ENCODE measurements at regions of chr11 and their contacts with region 1.

Region 1: DNA sequence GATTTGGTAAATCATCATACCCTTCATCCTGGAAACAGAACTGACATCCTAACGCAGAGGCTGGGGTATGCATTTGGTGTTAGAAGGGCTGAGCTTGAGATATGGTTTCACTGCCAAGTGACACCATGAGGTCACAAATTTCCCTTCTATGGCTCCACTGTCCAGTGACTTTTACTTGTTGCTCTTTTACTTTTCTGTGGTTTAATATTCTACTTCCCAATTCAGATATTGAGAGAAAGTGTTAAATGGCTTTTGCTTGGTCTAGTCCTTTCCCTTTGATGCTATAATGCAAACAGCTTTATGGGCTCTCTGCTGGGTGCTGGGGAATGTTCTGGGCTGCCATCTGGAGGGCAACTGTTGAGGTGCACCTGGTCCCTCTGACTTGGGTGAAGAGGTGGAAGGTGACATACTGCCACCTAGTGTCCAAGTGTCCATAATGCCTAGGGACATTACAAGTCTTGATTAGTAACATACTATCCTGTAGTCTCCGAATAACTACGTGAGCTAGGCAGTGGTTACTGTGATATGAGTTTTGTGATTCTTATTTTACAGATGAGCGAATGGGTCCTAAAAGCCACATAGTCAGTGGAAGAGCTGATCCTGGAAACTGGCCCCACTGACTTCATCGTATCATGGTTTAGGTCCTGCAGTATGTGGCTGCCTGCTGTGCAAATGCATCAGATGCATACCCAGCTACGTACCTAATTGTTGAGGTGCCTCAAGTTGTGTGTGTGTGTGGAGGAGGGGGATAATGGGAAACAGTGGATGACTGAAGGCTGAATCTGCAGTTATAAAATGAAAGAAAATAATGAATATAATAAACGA is 149.1 kb upstream of the RAG2 start:
- DNase-seq: peak; percentile 92
- H3K4me3 Mint-ChIP-seq: no peak overlapping the region
- H3K27ac Mint-ChIP-seq: peak overlapping the region; percentile 25
- H3K4me1 Mint-ChIP-seq: no peaks in the 10 kb centered on the region
- H3K27me3 Mint-ChIP-seq: peaks cover 24% of the 10 kb centered on the region

Region 2: GRCh38 chr11:36306888-36307287 is 440.2 kb before region 1 on chr11:
- CTCF ChIA-PET with region 1: no interaction called
- intact Hi-C with region 1: no loop called
- DNase-seq: peak; percentile 46
- H3K4me3 Mint-ChIP-seq: no peak overlapping the region
- H3K27ac Mint-ChIP-seq: no peak overlapping the region
- H3K4me1 Mint-ChIP-seq: no peaks in the 10 kb centered on the region
- H3K27me3 Mint-ChIP-seq: peaks cover 18% of the 10 kb centered on the region

Region 3: DNA sequence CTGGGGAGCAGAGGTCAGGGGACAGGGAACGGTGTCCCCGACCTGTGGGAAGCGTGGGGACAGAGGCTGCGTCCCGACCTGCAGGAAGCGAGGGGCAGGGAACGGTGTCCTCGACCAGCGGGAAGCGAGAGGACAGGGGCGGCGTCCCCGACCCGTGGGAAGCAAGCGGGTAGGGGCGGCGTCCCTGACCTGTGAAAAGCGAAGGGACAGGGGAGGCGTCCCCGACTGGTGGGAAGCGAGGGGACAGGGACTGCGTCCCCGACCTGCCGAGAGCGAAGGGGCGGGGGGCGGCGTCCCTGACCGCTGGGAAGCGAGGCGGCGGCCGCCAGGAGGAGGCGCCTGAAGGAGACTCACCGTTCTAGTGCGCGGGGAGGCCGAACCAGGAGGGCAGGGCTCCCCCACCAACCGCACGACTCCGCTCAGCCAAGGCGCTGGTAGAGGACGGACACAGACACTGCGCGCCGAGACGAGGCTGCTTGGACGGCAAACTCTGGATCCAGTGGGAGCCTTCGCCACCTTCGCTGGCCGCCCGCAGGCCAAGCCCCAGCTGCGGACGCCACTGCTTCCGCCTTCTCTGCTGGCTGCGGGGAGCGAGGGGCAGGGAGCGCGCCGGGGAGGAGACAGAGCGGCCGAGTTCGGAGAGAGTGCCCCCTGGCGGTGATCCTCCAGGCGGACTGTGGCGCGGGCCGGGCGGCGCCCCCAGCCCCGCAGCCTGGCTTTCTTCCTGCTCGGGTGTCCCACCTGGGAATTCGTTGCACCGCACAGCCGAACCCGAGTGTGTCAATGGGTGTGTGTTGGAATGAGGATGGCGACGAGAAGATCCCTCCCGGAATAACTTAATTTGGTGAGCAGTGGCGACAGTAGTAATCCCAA is 237.2 kb before region 1 on chr11 and contains the start of gene TRAF6:
- CTCF ChIA-PET with region 1: interaction called, 3 read pairs
- intact Hi-C with region 1: loop called (anchors 2 kb)
- DNase-seq: peak; percentile 91
- H3K4me3 Mint-ChIP-seq: peak within 1 kb of the TSS; percentile 97
- H3K27ac Mint-ChIP-seq: peak within 1 kb of the TSS; percentile 90
- H3K4me1 Mint-ChIP-seq: peaks cover 30% of the 10 kb centered on the region
- H3K27me3 Mint-ChIP-seq: no peaks in the 10 kb centered on the region
- total RNA-seq, gene TRAF6: 8.3 to 8.7 TPM

Region 4: DNA sequence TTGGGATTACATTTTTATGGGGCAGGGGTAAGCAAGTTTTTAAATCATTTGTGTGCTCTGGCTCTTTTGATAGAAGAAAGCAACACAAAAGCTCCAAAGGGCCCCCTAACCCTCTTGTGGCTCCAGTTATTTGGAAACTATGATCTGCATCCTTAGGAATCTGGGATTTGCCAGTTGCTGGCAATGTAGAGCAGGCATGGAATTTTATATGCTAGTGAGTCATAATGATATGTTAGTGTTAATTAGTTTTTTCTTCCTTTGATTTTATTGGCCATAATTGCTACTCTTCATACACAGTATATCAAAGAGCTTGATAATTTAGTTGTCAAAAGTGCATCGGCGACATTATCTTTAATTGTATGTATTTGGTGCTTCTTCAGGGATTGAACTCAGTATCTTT is 169.2 kb before region 1 on chr11:
- CTCF ChIA-PET with region 1: interaction called, 14 read pairs
- intact Hi-C with region 1: no loop called
- DNase-seq: no peak
- H3K4me3 Mint-ChIP-seq: no peak overlapping the region
- H3K27ac Mint-ChIP-seq: no peak overlapping the region
- H3K4me1 Mint-ChIP-seq: no peaks in the 10 kb centered on the region
- H3K27me3 Mint-ChIP-seq: peaks cover 5% of the 10 kb centered on the region

Region 5: DNA sequence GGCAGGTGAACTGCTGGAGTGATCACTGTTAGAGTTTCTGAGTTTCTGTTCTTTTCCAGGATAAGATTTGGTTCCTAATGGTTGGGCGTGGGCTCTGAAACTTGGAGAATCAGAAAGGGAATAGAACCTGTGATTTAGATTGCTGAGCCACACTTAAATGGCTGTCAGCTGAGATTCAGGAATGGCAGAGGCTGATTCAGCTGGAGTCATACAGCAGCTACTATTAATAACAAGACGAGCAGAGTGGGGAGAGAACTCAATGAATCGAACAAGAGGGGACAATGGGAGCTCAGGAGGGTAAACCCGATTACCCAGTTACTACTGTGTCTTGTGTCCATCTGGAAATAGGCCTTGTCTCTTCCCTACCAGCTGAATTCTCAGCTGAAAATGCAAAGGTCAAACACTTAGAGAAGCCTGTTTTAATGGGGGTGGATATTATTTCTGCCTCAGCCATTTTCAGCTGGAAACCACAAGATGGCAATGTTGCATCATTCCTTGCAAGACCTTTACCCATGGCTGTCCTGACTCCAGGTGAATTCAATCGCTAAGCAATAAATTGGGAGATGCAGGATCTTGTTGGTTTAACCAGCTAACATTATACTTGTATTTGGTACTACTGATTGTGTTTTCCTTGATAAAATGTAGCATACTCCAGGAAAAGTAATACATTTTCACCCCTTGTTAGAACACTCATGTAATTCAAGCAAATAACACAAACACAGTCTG is 44.6 kb before region 1 on chr11:
- CTCF ChIA-PET with region 1: interaction called, 65 read pairs
- intact Hi-C with region 1: loop called (anchors 1 kb)
- DNase-seq: peak; percentile 18
- H3K4me3 Mint-ChIP-seq: no peak overlapping the region
- H3K27ac Mint-ChIP-seq: no peak overlapping the region
- H3K4me1 Mint-ChIP-seq: peaks cover 4% of the 10 kb centered on the region
- H3K27me3 Mint-ChIP-seq: peaks cover 21% of the 10 kb centered on the region

Region 6: GRCh38 chr11:36719358-36720107 is 27.6 kb before region 1 on chr11:
- CTCF ChIA-PET with region 1: interaction called, 13 read pairs
- intact Hi-C with region 1: no loop called
- DNase-seq: no peak
- H3K4me3 Mint-ChIP-seq: no peak overlapping the region
- H3K27ac Mint-ChIP-seq: no peak overlapping the region
- H3K4me1 Mint-ChIP-seq: no peaks in the 10 kb centered on the region
- H3K27me3 Mint-ChIP-seq: peaks cover under 1% of the 10 kb centered on the region